ENCODE measurements at regions of chr22 and their contacts with region 1.

Region 1: DNA sequence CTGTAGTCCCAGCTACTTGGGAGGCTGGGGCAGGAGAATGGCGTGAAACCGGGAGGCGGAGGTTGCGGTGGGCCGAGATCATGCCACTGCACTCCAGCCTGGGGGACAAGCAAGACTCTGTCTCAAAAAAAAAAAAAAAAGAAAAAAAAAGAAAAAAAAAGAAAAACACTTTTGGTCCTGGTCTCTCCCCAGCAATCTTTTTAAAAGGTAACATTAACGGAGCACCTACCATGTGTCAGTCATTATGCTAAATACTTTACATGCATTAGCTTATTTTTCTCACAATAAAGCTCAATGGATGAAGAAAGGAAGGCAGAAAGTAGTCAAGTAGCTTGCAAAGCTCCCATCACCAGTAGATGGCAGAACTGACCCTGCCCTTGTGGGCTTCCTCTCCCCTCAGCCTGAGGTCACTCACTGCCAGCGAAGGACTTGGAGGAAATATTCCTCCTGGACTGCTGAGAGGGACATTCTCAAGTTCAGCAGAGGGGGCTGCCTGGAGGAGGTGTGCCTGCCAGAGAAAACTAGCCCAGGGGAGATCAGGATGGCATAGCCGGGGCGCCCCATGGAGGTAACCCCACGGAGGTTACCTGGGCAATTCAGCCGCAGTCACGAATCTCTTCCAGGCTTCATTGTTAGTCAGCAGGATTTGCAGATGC is 15.5 kb downstream of the APOL3 start:
- DNase-seq: peak in 1 of 2 donors; percentile 65
- ATAC-seq: peak; percentile 78
- H3K4me3 ChIP-seq: no peak overlapping the region
- H3K27ac ChIP-seq: no peak overlapping the region
- H3K4me1 ChIP-seq: no peaks in the 10 kb centered on the region
- H3K27me3 ChIP-seq: no peaks in the 10 kb centered on the region

Region 2: GRCh38 chr22:35761037-35761436 is 384.0 kb before region 1 on chr22:
- intact Hi-C with region 1: no loop called
- DNase-seq: no peak
- ATAC-seq: no peak
- H3K4me3 ChIP-seq: no peak overlapping the region
- H3K27ac ChIP-seq: no peak overlapping the region
- H3K4me1 ChIP-seq: no peaks in the 10 kb centered on the region
- H3K27me3 ChIP-seq: no peaks in the 10 kb centered on the region

Region 3: DNA sequence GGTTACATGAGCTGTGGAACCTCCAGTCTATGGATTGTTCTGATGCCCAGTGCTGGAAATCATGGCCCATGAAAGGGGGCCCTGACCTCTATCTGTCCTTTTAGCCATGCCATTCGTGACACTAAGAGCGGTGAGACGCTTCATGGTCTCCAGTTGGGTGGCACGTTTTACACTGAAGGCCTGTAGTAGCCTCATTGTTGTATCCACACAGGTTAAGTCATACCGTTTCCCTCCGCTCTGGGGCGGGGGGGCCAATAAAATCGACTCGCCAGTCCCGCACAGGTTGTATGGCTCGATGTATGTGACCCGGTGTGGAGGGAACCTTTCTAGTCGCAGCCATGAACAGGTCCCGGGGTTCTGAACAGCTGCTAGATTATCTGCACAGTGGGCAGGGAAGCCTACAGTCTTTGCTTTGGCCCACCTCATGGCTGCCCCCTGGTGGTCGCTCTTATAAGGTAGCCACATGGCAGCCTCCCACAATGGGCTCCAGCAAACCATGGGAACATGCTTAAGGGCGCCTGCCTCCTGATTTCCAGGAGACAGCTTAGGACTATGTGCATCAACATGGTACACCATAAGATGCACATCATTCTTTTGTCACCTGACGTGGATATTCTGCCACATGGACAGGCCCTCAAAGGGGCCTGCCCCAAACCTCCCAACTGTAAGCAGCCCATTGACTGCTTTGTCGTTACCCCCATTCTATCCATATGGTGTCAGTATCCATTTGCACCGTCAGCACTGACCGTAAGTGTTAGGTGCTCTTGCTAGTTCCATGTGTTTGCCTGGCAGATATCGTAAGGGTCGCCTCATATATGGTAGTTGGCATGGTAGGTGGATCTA is 35.2 kb after region 1 on chr22:
- intact Hi-C with region 1: loop called (anchors 1 to 2 kb)
- DNase-seq: peak; percentile 90 to 95
- ATAC-seq: peak; percentile 92
- H3K4me3 ChIP-seq: no peak overlapping the region
- H3K27ac ChIP-seq: no peak overlapping the region
- H3K4me1 ChIP-seq: no peaks in the 10 kb centered on the region
- H3K27me3 ChIP-seq: no peaks in the 10 kb centered on the region

Region 4: GRCh38 chr22:36486619-36487384 is 341.8 kb after region 1 on chr22:
- intact Hi-C with region 1: loop called in 1 of 2 experiments (anchors 5 kb)
- DNase-seq: no peak
- ATAC-seq: no peak
- H3K4me3 ChIP-seq: no peak overlapping the region
- H3K27ac ChIP-seq: no peak overlapping the region
- H3K4me1 ChIP-seq: no peaks in the 10 kb centered on the region
- H3K27me3 ChIP-seq: no peaks in the 10 kb centered on the region